GM12878 (cell line): ENCODE measurements at regions of chr12 and their contacts with region 1.

Region 1: GRCh38 chr12:128551266-128551665 is 272.5 kb downstream of the SLC15A4 start:
- DNase-seq: no peak
- ATAC-seq: no peak
- H3K4me3 ChIP-seq: no peak overlapping the region
- H3K27ac ChIP-seq: no peak overlapping the region
- H3K4me1 ChIP-seq: no peaks in the 10 kb centered on the region
- H3K27me3 ChIP-seq: no peaks in the 10 kb centered on the region; a peak in 1 of 4 replicates
- CTCF ChIP-seq: no peak
- EP300 ChIP-seq: no peak
- POLR2A ChIP-seq: no peak
- RAD21 ChIP-seq: no peak

Region 2: DNA sequence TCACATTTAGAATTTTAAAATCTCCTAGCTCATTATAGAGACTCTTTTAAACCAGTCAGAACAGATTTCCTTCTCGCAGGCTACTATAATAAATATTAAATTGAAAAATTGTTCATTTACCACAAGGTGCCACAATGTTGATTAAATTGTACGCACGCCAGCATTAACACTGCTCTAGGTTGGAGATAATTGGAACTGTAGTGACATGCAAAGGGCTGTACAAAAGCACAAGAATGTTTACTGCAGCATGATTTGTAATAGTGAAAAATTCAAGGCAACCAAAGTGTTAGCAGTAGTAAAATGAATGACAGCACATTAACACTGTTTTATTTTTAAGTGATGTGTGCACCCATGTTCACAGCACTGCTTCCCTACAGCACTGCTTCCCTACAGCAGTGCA is 1300.0 kb after region 1 on chr12:
- CTCF ChIA-PET with region 1: no interaction called
- POLR2A ChIA-PET with region 1: interaction called, 10 read pairs
- RAD21 ChIA-PET with region 1: no interaction called
- SMC1A ChIA-PET with region 1: no interaction called
- in situ Hi-C with region 1: no loop called
- intact Hi-C with region 1: no loop called
- DNase-seq: no peak
- ATAC-seq: no peak
- H3K4me3 ChIP-seq: no peak overlapping the region
- H3K27ac ChIP-seq: no peak overlapping the region
- H3K4me1 ChIP-seq: no peaks in the 10 kb centered on the region
- H3K27me3 ChIP-seq: no peaks in the 10 kb centered on the region
- CTCF ChIP-seq: no peak
- EP300 ChIP-seq: no peak
- POLR2A ChIP-seq: no peak
- RAD21 ChIP-seq: no peak